PC-3 (cell line): ENCODE measurements at regions of chr10 and their contacts with region 1.

Region 1: DNA sequence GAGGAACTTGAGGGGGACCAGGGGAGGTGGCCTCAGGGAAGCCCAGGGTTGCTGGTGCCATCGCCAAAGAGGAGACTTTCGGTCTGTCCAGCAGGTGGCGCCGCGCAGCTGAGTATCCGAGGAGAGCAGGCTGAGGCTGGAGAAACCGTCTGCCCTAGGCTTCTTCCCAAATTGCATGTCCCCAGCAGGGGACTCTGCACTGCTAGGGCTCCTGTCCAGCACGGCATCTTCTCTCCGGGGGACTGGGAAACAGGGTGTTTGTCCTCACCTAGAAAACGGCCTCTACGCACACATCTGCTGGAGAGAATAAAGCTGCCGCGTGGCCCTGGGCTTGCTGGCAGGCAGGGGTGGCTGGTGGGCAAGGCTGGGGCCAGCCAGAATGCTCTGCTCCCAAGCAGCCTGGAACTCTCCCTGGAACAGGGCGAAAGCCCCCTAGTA is 161.9 kb downstream of the SH2D4B start:
- DNase-seq: peak; percentile 72
- ATAC-seq: peak; percentile 94
- H3K4me3 ChIP-seq: no peak overlapping the region
- H3K27ac ChIP-seq: no peak overlapping the region
- H3K4me1 ChIP-seq: no peaks in the 10 kb centered on the region
- H3K27me3 ChIP-seq: no peaks in the 10 kb centered on the region
- CTCF ChIP-seq: peak; percentile 70

Region 2: DNA sequence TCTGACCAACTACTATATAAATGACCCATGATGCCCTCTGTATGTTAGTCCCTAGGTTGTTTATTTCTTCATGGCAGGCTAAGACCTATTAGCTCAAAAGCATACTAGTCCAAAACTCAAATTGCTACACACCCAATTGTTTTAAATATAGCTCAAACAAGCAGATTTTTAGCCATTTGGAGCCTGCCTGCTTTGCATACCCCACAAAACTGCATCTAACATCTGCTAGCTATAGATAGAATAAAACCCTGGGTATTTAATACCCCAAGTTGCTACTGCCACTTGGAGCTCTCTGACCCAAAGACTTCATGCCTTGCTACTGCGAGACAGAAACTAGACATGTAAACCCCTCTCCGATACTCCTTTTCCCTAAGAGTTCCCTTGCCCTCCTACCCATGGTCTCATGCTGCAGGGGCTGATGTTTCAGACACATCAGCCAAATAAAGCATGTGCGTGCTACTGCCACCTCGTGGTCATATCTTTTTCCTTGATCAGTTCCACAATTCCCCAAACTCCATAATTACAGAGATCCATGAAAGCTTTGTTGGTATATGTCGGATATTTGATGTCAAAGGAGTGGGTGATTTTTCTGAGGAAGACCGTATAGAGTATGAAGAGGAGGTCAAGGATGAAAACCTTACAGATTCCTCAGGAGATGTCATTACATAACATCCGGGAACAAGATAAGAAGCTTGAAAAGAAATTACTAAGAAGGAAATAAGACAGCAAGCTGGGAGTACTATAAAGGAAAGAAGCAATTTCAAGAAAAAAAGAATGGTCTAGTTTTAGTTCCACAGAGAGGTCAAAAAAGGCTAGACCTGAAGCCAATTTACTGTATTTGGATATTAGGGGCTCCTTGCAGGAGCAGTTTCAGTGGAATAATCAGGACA is 224.7 kb after region 1 on chr10:
- CTCF ChIA-PET with region 1: no interaction called
- POLR2A ChIA-PET with region 1: no interaction called
- intact Hi-C with region 1: loop called (anchors 2 kb)
- DNase-seq: peak; percentile 43
- ATAC-seq: no peak
- H3K4me3 ChIP-seq: no peak overlapping the region
- H3K27ac ChIP-seq: no peak overlapping the region
- H3K4me1 ChIP-seq: no peaks in the 10 kb centered on the region
- H3K27me3 ChIP-seq: no peaks in the 10 kb centered on the region
- CTCF ChIP-seq: peak; percentile 67

Region 3: GRCh38 chr10:81018708-81019365 is 319.2 kb after region 1 on chr10:
- CTCF ChIA-PET with region 1: no interaction called
- POLR2A ChIA-PET with region 1: no interaction called
- intact Hi-C with region 1: loop called (anchors 10 kb)
- DNase-seq: peak; percentile 34
- ATAC-seq: peak; percentile 49; the same call in 1 of the 2 replicates
- H3K4me3 ChIP-seq: no peak overlapping the region
- H3K27ac ChIP-seq: no peak overlapping the region
- H3K4me1 ChIP-seq: no peaks in the 10 kb centered on the region
- H3K27me3 ChIP-seq: no peaks in the 10 kb centered on the region
- CTCF ChIP-seq: peak; percentile 55